Mammary epithelial cell (primary cell): ENCODE measurements at regions of chr15 and their contacts with region 1.

Region 1: DNA sequence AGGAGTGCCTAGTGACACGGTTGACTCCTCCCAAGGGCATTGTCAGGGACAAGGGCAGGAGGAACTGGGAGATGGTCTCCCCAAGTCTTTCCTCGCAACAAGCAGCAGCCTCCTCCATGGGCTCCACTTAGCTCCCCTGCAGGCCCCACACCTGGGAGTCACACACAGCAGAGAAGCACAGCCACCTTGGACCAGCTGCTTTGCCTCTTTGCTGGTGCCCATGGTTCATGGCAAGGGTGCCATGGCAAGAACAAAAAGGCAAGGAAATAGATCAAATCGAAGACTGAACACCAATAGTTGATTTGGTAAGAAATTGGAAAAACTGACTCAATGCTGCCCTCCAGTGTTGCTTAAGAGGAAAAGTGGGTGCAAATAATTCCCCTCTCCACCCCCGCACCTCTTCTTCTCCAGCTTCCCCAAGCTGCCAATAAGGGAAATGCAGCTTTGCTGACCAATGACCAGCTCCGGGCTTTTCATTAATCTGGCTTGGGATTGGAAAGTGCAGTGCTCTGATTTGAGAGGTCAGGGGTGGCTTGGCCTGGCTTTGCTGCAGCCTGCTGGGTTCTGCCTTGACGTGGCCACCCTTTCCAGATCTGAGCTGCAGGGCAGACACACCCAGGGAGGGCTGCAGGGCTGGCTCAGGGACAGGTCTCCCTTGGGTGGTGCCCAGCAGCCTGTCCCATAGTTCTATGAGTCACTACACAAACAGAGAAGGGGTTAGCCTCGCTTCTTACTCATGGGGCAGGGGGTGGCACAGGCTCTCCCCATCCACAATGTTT is 162.0 kb downstream of the KLF13 start:
- DNase-seq: peak; percentile 78
- H3K4me3 ChIP-seq: no peak overlapping the region
- H3K27ac ChIP-seq: no peak overlapping the region
- H3K4me1 ChIP-seq: peaks cover 22% of the 10 kb centered on the region
- H3K27me3 ChIP-seq: no peaks in the 10 kb centered on the region
- CTCF ChIP-seq: peak; percentile 86 to 92

Region 2: DNA sequence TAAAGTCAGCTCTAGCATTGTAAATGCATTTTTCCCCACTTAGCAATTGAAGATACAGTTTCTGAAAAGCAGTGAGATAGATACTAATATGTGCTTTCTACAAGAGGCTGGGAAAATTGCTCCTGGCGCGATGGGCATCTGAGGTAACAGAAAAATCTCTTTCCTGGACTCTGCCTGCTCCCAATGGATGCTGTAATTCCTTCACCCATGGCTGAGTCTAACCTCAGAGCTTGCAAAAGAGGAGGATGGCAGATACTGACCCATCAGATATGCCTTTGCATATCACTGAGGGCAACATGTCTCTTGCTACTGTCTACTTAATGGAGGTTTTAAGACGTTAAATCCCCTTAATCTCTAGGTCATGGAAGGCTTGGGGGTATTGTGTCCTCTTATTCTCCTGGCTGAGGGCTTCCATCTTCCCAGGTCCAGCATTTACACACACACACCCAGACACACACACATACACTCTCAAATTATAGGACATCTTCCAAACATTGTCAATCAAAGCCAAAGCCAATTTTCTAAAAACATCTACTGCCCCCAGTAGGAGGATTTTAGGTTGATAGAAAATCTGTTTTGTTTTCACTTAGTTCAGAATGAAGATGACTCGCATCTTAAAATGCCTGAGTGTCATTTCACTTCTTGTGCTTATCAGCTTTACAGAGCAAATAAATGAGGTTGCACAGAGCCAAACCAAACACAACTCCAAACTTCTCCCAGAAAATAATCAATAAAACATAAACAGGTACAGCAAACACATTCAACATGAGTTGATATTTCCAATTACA is 389.5 kb before region 1 on chr15:
- CTCF ChIA-PET with region 1: no interaction called
- dilution Hi-C with region 1: loop called (anchors 25 kb)
- in situ Hi-C with region 1: no loop called
- intact Hi-C with region 1: no loop called
- DNase-seq: no peak
- H3K4me3 ChIP-seq: no peak overlapping the region
- H3K27ac ChIP-seq: no peak overlapping the region
- H3K4me1 ChIP-seq: no peaks in the 10 kb centered on the region
- H3K27me3 ChIP-seq: no peaks in the 10 kb centered on the region
- CTCF ChIP-seq: peak in 1 of 2 donors; percentile 19

Region 3: DNA sequence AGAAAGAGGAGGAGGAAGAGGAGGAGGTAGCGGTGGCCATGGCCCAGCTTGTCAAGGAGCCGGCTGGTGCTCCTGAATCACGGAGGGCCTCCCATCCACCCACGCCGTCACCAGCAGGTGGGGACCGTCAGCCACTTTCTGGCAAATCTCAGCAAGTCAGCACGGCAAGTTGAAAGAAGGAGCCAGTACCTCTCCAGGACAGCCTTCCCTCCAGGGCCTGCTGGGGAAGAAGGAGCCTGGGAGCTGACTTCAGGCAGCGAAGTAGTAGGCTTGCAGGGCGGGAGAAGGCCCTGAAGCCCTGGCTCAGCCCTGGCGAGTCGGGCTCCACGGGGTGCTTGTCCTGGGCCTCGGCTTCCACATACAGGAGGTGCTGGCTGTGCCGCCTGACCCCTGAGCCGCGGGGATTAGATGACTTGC is 287.9 kb before region 1 on chr15:
- CTCF ChIA-PET with region 1: interaction called, 9 read pairs
- dilution Hi-C with region 1: no loop called
- in situ Hi-C with region 1: loop called in 1 of 2 experiments (anchors 5 kb)
- intact Hi-C with region 1: loop called (anchors 1 kb)
- DNase-seq: peak; percentile 36
- H3K4me3 ChIP-seq: no peak overlapping the region
- H3K27ac ChIP-seq: no peak overlapping the region
- H3K4me1 ChIP-seq: no peaks in the 10 kb centered on the region
- H3K27me3 ChIP-seq: no peaks in the 10 kb centered on the region
- CTCF ChIP-seq: peak; percentile 44 to 80

Region 4: GRCh38 chr15:31302778-31303725 is 185.6 kb before region 1 on chr15:
- CTCF ChIA-PET with region 1: no interaction called
- dilution Hi-C with region 1: no loop called
- in situ Hi-C with region 1: no loop called
- intact Hi-C with region 1: no loop called
- DNase-seq: no peak
- H3K4me3 ChIP-seq: no peak overlapping the region
- H3K27ac ChIP-seq: no peak overlapping the region
- H3K4me1 ChIP-seq: no peaks in the 10 kb centered on the region
- H3K27me3 ChIP-seq: no peaks in the 10 kb centered on the region
- CTCF ChIP-seq: no peak

Region 5: DNA sequence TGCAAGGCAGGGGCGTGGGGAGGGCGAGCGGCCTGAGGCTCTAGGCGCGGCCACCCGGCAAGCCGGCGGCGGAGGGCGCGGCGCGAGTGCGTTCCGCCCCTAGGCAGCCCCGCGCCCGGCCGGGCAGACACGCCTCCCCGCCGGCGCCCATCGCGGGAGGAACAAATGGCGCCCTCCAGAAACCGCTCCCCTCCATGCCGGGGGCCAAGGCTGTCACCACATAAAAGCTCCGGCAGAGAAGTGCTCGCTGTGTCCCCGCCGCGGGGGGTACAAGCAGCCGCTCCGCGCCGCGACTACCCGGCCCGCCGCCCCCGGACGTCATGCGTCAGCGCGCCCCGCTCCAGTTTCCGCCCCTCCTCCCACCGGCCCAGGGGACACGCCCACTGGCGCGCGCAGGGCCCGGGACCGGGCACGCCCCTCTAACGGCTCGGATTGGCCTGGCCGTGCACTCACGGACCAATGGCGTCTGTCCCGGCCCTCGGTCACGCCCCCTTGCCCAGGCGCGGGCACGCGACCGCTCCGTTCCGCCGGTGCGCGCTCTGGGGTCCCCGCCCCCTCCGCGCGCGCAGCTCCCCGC is 162.4 kb before region 1 on chr15:
- CTCF ChIA-PET with region 1: no interaction called
- dilution Hi-C with region 1: no loop called
- in situ Hi-C with region 1: no loop called
- intact Hi-C with region 1: loop called (anchors 1 kb)
- DNase-seq: peak; percentile 98
- H3K4me3 ChIP-seq: peak overlapping the region; percentile 68 to 80 (median 77)
- H3K27ac ChIP-seq: peak overlapping the region; percentile 76
- H3K4me1 ChIP-seq: peaks cover 14% of the 10 kb centered on the region
- H3K27me3 ChIP-seq: no peaks in the 10 kb centered on the region
- CTCF ChIP-seq: no peak

Region 6: DNA sequence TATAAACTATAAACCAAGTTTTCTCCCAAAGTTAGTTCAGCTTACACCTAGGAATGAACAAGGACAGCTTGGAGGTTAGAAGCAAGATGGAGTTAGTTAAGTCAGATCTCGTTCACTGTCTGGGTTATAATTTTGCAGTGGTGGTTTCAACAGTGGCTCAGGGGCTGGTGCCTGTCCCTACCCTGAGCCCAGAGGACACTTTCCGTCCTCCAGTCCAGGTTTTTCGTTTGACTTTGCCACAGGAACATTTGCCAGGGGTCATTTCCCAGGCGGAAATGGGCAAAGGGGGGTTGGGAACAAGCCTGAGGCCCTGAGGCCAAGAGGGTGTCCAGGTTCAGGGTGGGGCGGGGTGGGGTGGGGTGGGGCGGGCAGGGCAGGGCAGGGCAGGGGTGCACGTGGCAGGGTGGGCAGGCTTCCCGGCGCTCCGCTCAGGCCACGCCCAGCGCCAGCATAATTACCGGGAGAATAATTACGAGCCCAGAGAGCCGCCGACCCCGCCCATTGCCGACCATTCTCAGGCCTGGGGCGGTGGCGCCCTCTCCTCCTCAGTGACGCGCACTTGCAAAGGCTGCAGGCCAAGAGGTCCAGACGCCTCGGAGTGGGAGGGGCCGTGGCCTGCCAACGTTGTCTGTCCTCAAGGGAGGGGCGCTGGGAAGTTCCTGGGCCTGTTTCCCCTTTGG is 91.6 kb before region 1 on chr15:
- CTCF ChIA-PET with region 1: interaction called, 6 read pairs
- dilution Hi-C with region 1: no loop called
- in situ Hi-C with region 1: no loop called
- intact Hi-C with region 1: loop called (anchors 1 kb)
- DNase-seq: peak; percentile 89
- H3K4me3 ChIP-seq: no peak overlapping the region
- H3K27ac ChIP-seq: peak overlapping the region; percentile 67
- H3K4me1 ChIP-seq: peaks cover 43% of the 10 kb centered on the region
- H3K27me3 ChIP-seq: no peaks in the 10 kb centered on the region
- CTCF ChIP-seq: no peak

Region 7: GRCh38 chr15:31412824-31413223 is 75.8 kb before region 1 on chr15:
- CTCF ChIA-PET with region 1: no interaction called
- dilution Hi-C with region 1: no loop called
- in situ Hi-C with region 1: no loop called
- intact Hi-C with region 1: no loop called
- DNase-seq: peak; percentile 56
- H3K4me3 ChIP-seq: no peak overlapping the region
- H3K27ac ChIP-seq: no peak overlapping the region
- H3K4me1 ChIP-seq: peaks cover 6% of the 10 kb centered on the region
- H3K27me3 ChIP-seq: no peaks in the 10 kb centered on the region
- CTCF ChIP-seq: no peak

Region 8: GRCh38 chr15:31465083-31465955 is 23.3 kb before region 1 on chr15:
- CTCF ChIA-PET with region 1: no interaction called
- dilution Hi-C with region 1: no loop called
- in situ Hi-C with region 1: no loop called
- intact Hi-C with region 1: loop called (anchors 2 kb)
- DNase-seq: peak; percentile 90
- H3K4me3 ChIP-seq: peak overlapping the region in 1 of 3 experiments; percentile 1
- H3K27ac ChIP-seq: peak overlapping the region; percentile 84
- H3K4me1 ChIP-seq: peaks cover 15% of the 10 kb centered on the region
- H3K27me3 ChIP-seq: no peaks in the 10 kb centered on the region
- CTCF ChIP-seq: no peak